A549 (cell line): ENCODE measurements at regions of chr6 and their contacts with region 1.

Region 1: GRCh38 chr6:31888276-31889258 is 8.9 kb downstream of the EHMT2 start:
- DNase-seq: no peak
- ATAC-seq: peak in 1 of 2 experiments; percentile 74; a peak in 3 of 6 replicates
- H3K4me3 ChIP-seq: no peak overlapping the region
- H3K27ac ChIP-seq: no peak overlapping the region
- H3K4me1 ChIP-seq: no peaks in the 10 kb centered on the region
- CTCF ChIP-seq: peak; percentile 61
- EP300 ChIP-seq: no peak
- POLR2A ChIP-seq: no peak
- RAD21 ChIP-seq: peak; percentile 36 to 39; a peak in 2 of 5 replicates

Region 2: DNA sequence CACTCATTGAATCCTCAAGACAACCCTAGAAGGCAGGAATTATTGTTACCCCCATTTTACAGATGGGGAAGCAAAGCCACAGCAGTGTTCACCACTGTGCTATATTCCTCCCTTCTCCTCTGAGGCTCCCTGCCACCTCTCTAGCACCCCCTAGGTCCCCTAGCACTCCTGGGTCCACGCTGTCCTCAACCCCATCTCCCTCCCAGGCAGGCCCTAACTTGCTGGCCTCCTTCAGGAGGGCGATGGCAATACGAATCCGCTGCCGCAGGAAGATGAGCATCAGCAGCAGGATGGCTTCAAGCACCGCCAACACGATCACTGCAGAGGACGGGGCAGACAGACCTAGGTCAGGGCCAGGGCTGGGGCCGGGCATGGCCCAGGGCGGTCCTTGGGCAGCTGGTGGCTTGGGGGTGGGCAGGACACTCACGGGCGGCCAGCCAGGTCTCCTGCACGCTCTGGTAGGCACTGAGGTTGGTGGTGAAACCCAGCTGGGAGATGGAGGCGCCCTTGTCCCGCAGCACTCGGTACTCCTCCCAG is 18.1 kb before region 1 on chr6:
- CTCF ChIA-PET with region 1: interaction called, 11 read pairs
- POLR2A ChIA-PET with region 1: no interaction called
- DNase-seq: no peak
- ATAC-seq: peak; percentile 55 to 68; a peak in 4 of 6 replicates
- H3K4me3 ChIP-seq: no peak overlapping the region
- H3K27ac ChIP-seq: no peak overlapping the region
- H3K4me1 ChIP-seq: no peaks in the 10 kb centered on the region
- CTCF ChIP-seq: no peak
- EP300 ChIP-seq: no peak
- POLR2A ChIP-seq: no peak
- RAD21 ChIP-seq: 0 out of 5 replicates have a peak, but pooled peaks of 1 of the 2 experiments have one; percentile 4

Region 3: DNA sequence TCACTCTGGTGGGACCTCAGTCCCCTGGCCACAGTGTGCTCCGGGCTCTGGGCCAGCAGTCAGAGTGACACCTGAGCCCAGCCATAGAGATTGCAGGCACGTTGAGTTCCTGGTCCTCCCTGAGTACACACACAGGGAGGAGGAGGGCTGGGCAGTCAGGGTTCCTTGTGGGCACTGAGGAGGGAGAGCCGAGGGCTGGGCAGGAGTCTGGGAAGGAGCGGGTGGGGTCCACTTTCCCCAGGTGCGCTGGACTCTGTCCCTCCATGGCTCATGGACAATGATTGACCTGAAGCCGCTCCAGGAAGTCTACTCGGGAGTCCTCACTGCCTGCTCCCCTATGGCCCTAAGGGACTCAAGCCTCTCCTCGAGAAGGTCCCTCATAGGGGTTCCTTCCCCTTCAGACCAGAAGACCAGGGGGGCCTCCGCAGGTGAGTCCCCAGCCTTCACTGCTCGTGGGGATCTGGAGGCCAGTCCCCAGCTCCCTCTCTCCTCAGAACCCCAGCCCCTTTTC is 10.9 kb before region 1 on chr6:
- CTCF ChIA-PET with region 1: interaction called, 25 read pairs
- POLR2A ChIA-PET with region 1: no interaction called
- DNase-seq: no peak
- ATAC-seq: peak; percentile 45 to 60; a peak in 5 of 6 replicates
- H3K4me3 ChIP-seq: no peak overlapping the region
- H3K27ac ChIP-seq: peak overlapping the region in 1 of 2 experiments; percentile 16; a peak in 1 of 6 replicates
- H3K4me1 ChIP-seq: no peaks in the 10 kb centered on the region
- CTCF ChIP-seq: no peak
- EP300 ChIP-seq: no peak
- POLR2A ChIP-seq: no peak
- RAD21 ChIP-seq: no peak

Region 4: DNA sequence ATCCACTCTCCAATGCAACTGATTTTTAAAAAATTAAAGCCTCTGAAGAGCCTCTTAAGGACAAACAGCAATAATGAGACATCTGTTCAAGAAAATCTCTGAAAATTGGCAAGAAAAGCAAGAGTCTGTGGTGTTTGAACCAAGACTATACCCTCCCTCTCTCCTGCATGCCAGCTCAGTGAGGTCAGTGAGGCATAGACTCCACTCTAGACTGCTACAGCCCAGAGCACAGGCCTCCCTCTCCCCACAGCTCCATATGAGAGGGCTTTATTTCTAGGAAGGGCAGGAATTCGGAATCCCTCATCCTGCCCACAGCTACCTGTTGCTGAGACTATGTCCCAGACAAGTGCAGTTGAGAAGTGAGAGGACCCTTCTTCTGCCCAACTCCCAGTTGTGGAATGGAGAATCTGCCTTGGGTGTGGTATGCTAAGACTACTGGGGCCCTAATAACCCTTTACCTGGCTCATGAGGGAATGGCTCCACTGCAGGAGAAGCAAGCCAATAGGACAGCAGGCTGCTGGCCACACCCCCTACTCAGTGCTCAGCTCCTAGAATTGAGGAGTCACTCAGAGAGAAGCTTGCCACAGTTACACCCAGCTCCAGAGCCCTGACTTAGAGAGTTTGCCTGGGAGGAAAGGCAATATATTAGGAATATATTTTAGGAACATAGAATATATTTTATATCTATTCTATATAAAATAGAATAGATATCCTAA is 726.0 kb after region 1 on chr6:
- CTCF ChIA-PET with region 1: no interaction called
- POLR2A ChIA-PET with region 1: no interaction called
- DNase-seq: no peak
- ATAC-seq: no peak
- H3K4me3 ChIP-seq: no peak overlapping the region
- H3K27ac ChIP-seq: no peak overlapping the region
- H3K4me1 ChIP-seq: no peaks in the 10 kb centered on the region
- CTCF ChIP-seq: no peak
- EP300 ChIP-seq: no peak
- POLR2A ChIP-seq: no peak
- RAD21 ChIP-seq: no peak